ENCODE measurements at regions of chr10 and their contacts with region 1.

Region 1: GRCh38 chr10:93999401-93999851 is 5.7 kb downstream of the PLCE1 start:
- DNase-seq: no peak

Region 2: GRCh38 chr10:93859049-93859655 is 140.3 kb before region 1 on chr10:
- intact Hi-C with region 1: no loop called
- DNase-seq: no peak

Region 3: GRCh38 chr10:94133239-94133638 is 133.8 kb after region 1 on chr10:
- intact Hi-C with region 1: loop called (anchors 5 kb)
- DNase-seq: peak; percentile 90